Right ventricle myocardium superior (tissue), 1 donor: ENCODE measurements at regions of chr4 and their contacts with region 1.

Region 1: GRCh38 chr4:119041951-119042560 is 93.6 kb upstream of the MYOZ2 start:
- DNase-seq: no peak
- ATAC-seq: peak; percentile 74

Region 2: DNA sequence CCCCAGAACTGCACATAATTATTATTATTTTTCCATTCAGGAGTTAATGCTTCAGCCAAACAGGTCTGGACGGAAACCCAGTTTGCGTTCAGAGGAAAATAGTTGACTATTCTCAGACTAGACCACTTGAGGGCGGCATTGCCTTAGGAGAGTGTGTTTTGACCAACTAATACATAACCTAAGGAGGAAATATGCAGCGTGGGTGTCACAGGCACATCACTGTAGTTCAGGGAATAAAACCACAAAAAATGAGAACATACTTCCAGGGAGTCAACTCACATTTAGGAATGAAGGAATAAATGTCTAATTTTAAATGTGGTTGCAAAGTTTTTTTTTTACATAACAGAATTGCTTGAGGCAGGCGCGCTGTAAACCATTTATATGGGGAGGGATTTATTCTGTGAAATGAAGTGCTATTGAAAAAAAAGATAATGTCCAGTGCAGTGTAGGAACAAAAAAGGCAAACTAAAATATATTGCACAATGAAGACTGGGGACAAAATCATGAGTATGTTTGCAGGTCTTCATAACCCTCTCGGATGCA is 60.1 kb before region 1 on chr4:
- intact Hi-C with region 1: loop called (anchors 10 kb)
- DNase-seq: no peak
- ATAC-seq: peak; percentile 78

Region 3: GRCh38 chr4:119138046-119138445 is 96.0 kb after region 1 on chr4:
- intact Hi-C with region 1: loop called (anchors 10 kb)
- DNase-seq: no peak
- ATAC-seq: peak; percentile 67

Region 4: DNA sequence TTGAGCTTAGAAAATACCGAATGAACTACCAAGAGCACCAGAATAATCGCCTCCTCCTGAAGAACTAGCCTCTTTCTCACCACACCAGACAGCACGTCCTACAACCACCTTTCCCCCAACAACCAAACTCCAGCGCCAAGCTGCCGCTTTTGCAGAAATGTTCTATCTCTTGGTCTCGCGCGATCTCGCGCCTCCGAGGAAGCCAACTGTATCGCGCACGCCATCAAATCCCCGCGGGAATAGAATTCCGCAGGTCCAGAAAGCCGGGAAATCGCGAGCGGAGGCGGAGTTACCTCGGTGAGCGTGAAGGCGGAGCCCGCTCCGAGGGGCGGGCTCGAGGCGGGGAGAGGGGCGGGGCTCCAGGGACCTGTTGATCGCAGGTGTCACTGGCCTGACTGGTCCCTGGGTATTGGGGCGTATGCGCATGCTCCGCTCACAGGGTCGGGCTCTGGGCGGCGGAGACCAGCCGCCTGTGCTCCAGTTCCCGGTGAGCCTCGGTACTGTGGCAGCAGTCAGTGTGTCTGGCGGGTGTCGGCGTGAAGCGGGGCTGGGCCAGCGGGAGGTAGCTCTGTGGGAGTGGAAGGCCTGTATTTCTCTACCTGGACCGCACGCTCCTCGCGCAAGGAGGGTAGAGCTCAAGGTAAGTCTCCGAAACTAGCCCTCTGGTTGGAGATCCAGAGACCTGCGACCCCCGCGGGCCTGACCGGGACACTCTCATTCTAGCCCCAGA is 170.3 kb after region 1 on chr4 and contains the start of gene USP53:
- intact Hi-C with region 1: loop called (anchors 10 kb)
- DNase-seq: peak; percentile 98
- ATAC-seq: peak; percentile 97
- total RNA-seq, gene USP53: 34.7 TPM

Region 5: GRCh38 chr4:119261986-119262385 is 219.9 kb after region 1 on chr4:
- intact Hi-C with region 1: no loop called
- DNase-seq: no peak
- ATAC-seq: no peak

Region 6: DNA sequence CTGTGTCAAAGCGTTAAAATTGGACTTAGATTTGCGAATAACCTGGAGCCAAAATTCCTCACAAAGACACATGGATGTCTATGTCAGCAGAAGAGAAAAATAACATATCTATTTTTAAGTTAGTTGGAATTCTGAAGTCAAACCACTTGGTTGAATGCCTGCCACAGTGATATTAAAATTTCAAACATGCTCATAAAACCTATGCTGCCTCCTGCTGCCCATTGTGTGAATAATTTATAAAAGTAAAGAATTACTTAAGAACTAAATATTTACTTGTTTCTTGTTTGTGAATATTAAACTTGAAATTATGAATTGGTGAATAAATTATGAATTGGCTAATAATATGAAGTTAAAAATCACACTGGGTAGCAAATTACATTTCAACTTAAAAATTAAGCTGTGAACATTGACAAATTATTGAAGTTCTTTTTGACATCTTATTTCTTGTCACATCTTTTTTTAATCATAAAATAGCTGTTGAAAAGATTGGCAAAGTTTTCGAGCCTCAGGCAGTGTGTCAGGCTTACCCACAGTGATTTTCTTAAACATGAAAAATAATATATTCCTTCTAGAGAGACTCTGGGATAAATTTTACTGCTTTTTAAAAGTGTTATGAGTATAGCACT is 244.4 kb after region 1 on chr4:
- intact Hi-C with region 1: loop called (anchors 5 kb)
- DNase-seq: no peak
- ATAC-seq: peak; percentile 77